HepG2 (cell line): ENCODE measurements at regions of chr1 and their contacts with region 1.

Region 1: GRCh38 chr1:17826165-17826488 is 71.0 kb downstream of the ACTL8 start:
- DNase-seq: peak; percentile 5
- ATAC-seq: peak; percentile 72
- H3K4me3 ChIP-seq: no peak overlapping the region
- H3K27ac ChIP-seq: no peak overlapping the region
- H3K4me1 ChIP-seq: no peaks in the 10 kb centered on the region
- H3K27me3 ChIP-seq: peaks cover 0 to 4% of the 10 kb centered on the region in 2 experiments; a peak in 1 of 5 replicates
- CTCF ChIP-seq: peak; percentile 64
- EP300 ChIP-seq: no peak
- POLR2A ChIP-seq: no peak
- RAD21 ChIP-seq: 0 out of 2 replicates have a peak, but pooled peaks have one; percentile 16

Region 2: DNA sequence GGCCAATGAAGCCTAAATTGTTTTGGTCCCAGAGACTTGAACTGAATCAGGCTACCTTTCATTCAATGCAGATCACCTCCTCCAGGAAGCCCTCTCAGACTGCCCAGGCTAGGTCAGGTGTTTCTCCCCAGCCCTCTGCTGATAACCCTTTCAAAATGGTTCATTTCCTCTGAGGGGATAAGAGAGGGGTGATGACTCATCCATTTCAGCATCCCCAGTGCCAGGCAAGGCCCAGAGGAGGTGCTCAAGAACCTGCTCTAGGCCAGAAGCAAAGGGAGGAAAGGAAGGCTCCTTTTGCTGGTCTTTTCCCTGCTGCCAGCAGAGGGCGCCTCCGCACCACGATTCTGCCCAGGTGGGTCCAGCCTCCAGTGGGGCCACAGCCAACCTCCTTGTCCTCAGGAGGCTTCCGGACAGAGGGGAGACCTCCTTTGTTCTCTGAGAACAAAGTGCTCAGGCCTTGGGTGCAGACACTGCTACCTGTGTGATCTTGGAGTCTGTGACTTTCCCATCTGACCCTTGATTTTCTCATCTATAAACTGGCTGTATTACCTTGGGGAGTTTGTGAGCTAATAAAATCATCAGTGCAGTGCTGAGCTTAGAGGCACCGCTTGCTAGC is 331.9 kb before region 1 on chr1:
- CTCF ChIA-PET with region 1: interaction called, 4 read pairs
- POLR2A ChIA-PET with region 1: no interaction called
- in situ Hi-C with region 1: loop called (anchors 10 kb)
- intact Hi-C with region 1: no loop called
- DNase-seq: peak; percentile 58
- ATAC-seq: peak; percentile 91
- H3K4me3 ChIP-seq: no peak overlapping the region
- H3K27ac ChIP-seq: no peak overlapping the region
- H3K4me1 ChIP-seq: peaks cover 32% of the 10 kb centered on the region
- H3K27me3 ChIP-seq: no peaks in the 10 kb centered on the region; a peak in 1 of 5 replicates
- CTCF ChIP-seq: peak; percentile 97
- EP300 ChIP-seq: no peak
- POLR2A ChIP-seq: no peak
- RAD21 ChIP-seq: peak; percentile 95

Region 3: GRCh38 chr1:17661546-17662157 is 164.5 kb before region 1 on chr1:
- CTCF ChIA-PET with region 1: no interaction called
- POLR2A ChIA-PET with region 1: no interaction called
- in situ Hi-C with region 1: no loop called
- intact Hi-C with region 1: loop called (anchors 2 kb)
- DNase-seq: peak; percentile 41
- ATAC-seq: peak; percentile 43; the same call in 2 of the 3 replicates
- H3K4me3 ChIP-seq: no peak overlapping the region
- H3K27ac ChIP-seq: no peak overlapping the region
- H3K4me1 ChIP-seq: no peaks in the 10 kb centered on the region
- H3K27me3 ChIP-seq: no peaks in the 10 kb centered on the region
- CTCF ChIP-seq: peak; percentile 81
- EP300 ChIP-seq: no peak
- POLR2A ChIP-seq: no peak
- RAD21 ChIP-seq: peak; percentile 47